ENCODE measurements at regions of chr1 and their contacts with region 1.

Region 1: GRCh38 chr1:150486964-150487762 is at the start of gene TARS2:
- DNase-seq: peak; percentile 92 to 97 (median 96)
- ATAC-seq: peak; percentile 100
- H3K4me3 ChIP-seq: peak within 1 kb of the TSS; percentile 59 to 99 (median 76)
- H3K27ac ChIP-seq: peak within 1 kb of the TSS; percentile 55 to 89 (median 77)
- H3K4me1 ChIP-seq: peaks cover 0 to 18% (median 9%) of the 10 kb centered on the region in 12 donors
- H3K27me3 ChIP-seq: no peaks in the 10 kb centered on the region
- CTCF ChIP-seq: peak in 9 of 12 donors; percentile 13 to 43 (median 26)
- POLR2A ChIP-seq: peak in 1 of 2 donors; percentile 65
- total RNA-seq, gene TARS2: 21.9 to 46.5 (median 28.9) TPM

Region 2: GRCh38 chr1:150352866-150353265 is 134.3 kb before region 1 on chr1:
- intact Hi-C with region 1: no loop called
- DNase-seq: no peak
- ATAC-seq: peak; percentile 20 to 81 (median 62)
- H3K4me3 ChIP-seq: no peak overlapping the region
- H3K27ac ChIP-seq: no peak overlapping the region
- H3K4me1 ChIP-seq: no peaks in the 10 kb centered on the region
- H3K27me3 ChIP-seq: no peaks in the 10 kb centered on the region
- CTCF ChIP-seq: no peak
- POLR2A ChIP-seq: no peak

Region 3: DNA sequence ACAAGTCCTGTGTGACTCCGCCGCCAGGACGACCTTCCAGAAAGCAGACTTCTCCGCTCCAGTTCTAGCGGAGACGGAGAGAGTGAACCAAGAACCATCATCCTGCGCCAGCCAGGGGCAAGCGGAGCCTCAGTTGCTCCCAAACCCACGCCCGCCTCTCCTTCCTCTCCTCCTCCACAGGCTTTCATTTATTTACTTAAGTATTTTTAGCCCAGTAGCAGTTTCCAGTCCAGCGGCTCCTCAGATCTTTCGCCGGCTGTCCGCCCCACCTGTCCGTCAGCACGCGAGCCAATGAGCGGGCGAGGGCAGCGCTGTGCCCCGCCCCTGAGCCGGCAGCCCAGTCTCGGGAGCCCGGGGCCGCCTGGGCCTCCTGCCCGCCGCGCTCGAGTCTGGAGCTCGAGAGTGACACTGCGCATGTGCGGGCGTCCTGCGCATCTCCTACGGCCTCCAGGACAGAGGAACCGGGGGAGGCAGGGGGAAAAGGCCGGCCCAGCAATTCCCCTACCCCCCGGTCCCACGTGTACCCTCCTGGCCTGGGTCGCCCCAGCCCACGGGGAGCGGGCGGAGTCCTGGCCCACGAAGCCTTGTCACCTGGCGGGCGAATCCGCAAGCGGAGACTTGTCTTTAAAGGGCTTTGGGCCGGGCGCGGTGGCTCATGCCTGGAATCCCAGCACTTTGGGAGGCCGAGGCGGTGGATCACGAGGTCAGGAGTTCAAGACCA is 28.3 kb after region 1 on chr1 and contains the start of gene FALEC:
- intact Hi-C with region 1: loop called in 1 of 10 experiments (anchors 1 kb)
- DNase-seq: peak; percentile 97 to 99 (median 98)
- ATAC-seq: peak; percentile 99
- H3K4me3 ChIP-seq: peak within 1 kb of the TSS; percentile 55 to 86 (median 63)
- H3K27ac ChIP-seq: peak within 1 kb of the TSS; percentile 72 to 93 (median 85)
- H3K4me1 ChIP-seq: peaks cover 0 to 16% (median 11%) of the 10 kb centered on the region in 12 donors
- H3K27me3 ChIP-seq: no peaks in the 10 kb centered on the region
- CTCF ChIP-seq: no peak
- POLR2A ChIP-seq: peak in 1 of 2 donors; percentile 65
- total RNA-seq, gene FALEC: 0.51 to 0.96 TPM in 2 of 9 donors, not detected in the others

Region 4: GRCh38 chr1:150532868-150533302 is 45.7 kb after region 1 on chr1:
- intact Hi-C with region 1: loop called in 2 of 10 experiments (anchors 5 kb)
- DNase-seq: peak in 1 of 5 donors; percentile 19
- ATAC-seq: no peak
- H3K4me3 ChIP-seq: peak overlapping the region in 1 of 12 donors; percentile 2
- H3K27ac ChIP-seq: peak overlapping the region in 11 of 12 donors; percentile 37 to 86 (median 74)
- H3K4me1 ChIP-seq: peaks cover 0 to 42% (median 9%) of the 10 kb centered on the region in 12 donors
- H3K27me3 ChIP-seq: no peaks in the 10 kb centered on the region
- CTCF ChIP-seq: peak in 5 of 12 donors; percentile 13 to 33 (median 31)
- POLR2A ChIP-seq: no peak

Region 5: DNA sequence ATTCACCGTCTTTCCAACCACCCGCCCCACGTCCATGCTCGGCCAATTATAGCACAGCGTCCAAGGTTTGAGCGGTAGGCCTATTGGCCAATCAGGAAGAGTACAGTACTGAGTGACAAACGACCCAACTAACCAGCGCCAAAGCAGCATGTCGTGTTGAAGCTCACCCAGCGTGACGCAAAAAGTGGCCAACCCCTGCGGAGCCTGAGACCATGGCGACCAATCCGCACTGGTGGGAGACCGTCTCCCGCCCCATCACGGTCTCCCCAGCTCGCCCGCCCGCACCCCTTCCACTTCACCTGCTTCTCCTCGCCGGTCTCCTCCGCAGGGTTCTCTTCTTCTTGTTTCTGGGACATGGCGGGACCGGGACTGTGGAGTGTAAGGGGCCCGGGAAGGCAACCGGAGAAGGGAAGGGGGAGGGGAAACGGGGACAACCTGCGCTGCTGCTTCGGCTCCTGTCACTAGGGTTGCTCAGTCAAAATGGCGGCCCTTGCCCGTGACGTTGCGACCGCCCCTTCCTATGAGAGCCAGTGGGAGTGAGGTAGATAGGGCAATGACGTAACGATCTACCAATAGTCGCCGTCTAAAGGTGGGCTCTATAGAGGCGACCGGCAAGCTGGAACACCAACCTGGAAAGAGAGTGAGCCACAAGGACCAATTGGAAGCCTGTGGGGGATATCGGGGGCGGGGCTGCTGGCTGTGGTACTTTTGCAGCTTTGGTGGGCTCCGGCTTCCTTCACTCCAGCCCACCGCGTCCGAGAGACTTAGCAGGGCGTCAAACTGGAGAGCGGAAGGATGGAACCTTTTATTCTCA is 142.2 kb after region 1 on chr1 and contains the start of gene ENSA:
- intact Hi-C with region 1: loop called in 1 of 10 experiments (anchors 10 kb)
- DNase-seq: peak; percentile 97 to 100 (median 98)
- ATAC-seq: peak; percentile 97 to 98 (median 97)
- H3K4me3 ChIP-seq: peak within 1 kb of the TSS; percentile 15 to 85 (median 70)
- H3K27ac ChIP-seq: peak within 1 kb of the TSS; percentile 85 to 99 (median 96)
- H3K4me1 ChIP-seq: peaks cover 3 to 35% (median 21%) of the 10 kb centered on the region in 12 donors
- H3K27me3 ChIP-seq: no peaks in the 10 kb centered on the region
- CTCF ChIP-seq: no peak
- POLR2A ChIP-seq: peak; percentile 82 to 85
- total RNA-seq, gene ENSA: 118 to 186 (median 130) TPM

Measured in heart left ventricle (tissue), 16 donors.